ENCODE measurements at regions of chr3 and their contacts with region 1.

Region 1: GRCh38 chr3:120450600-120451271 is at the start of gene FSTL1:
- DNase-seq: peak; percentile 64
- H3K4me3 ChIP-seq: peak within 1 kb of the TSS; percentile 80 to 96
- H3K27ac ChIP-seq: peak within 1 kb of the TSS; percentile 95 to 98
- H3K4me1 ChIP-seq: peaks cover 16% of the 10 kb centered on the region
- H3K27me3 ChIP-seq: no peaks in the 10 kb centered on the region
- CTCF ChIP-seq: no peak
- POLR2A ChIP-seq: peak; percentile 57
- total RNA-seq, gene FSTL1: 212 to 265 TPM

Region 2: GRCh38 chr3:120095226-120095978 is 355.3 kb before region 1 on chr3:
- intact Hi-C with region 1: no loop called
- DNase-seq: peak; percentile 89
- H3K4me3 ChIP-seq: peak overlapping the region; percentile 88 to 91
- H3K27ac ChIP-seq: peak overlapping the region; percentile 100
- H3K4me1 ChIP-seq: peaks cover 6% of the 10 kb centered on the region
- H3K27me3 ChIP-seq: no peaks in the 10 kb centered on the region
- CTCF ChIP-seq: no peak
- POLR2A ChIP-seq: peak; percentile 87

Region 3: GRCh38 chr3:120498556-120499346 is 48.0 kb after region 1 on chr3:
- intact Hi-C with region 1: loop called (anchors 10 kb)
- DNase-seq: no peak
- H3K4me3 ChIP-seq: no peak overlapping the region
- H3K27ac ChIP-seq: no peak overlapping the region
- H3K4me1 ChIP-seq: no peaks in the 10 kb centered on the region
- H3K27me3 ChIP-seq: no peaks in the 10 kb centered on the region
- CTCF ChIP-seq: no peak
- POLR2A ChIP-seq: no peak

Measured in prostate gland (tissue), 2 donors.